Gastrocnemius medialis (tissue), 4 donors: ENCODE measurements at regions of chr7 and their contacts with region 1.

Region 1: GRCh38 chr7:6423942-6424701 is 23.6 kb downstream of the DAGLB start:
- DNase-seq: peak; percentile 90 to 97
- ATAC-seq: peak; percentile 76 to 79
- H3K4me3 ChIP-seq: no peak overlapping the region
- H3K27ac ChIP-seq: peak overlapping the region; percentile 81 to 87 (median 84)
- H3K4me1 ChIP-seq: peaks cover 21 to 35% of the 10 kb centered on the region in 2 donors
- H3K27me3 ChIP-seq: no peaks in the 10 kb centered on the region
- CTCF ChIP-seq: peak in 4 of 5 experiments; percentile 9 to 42 (median 30)
- POLR2A ChIP-seq: no peak

Region 2: DNA sequence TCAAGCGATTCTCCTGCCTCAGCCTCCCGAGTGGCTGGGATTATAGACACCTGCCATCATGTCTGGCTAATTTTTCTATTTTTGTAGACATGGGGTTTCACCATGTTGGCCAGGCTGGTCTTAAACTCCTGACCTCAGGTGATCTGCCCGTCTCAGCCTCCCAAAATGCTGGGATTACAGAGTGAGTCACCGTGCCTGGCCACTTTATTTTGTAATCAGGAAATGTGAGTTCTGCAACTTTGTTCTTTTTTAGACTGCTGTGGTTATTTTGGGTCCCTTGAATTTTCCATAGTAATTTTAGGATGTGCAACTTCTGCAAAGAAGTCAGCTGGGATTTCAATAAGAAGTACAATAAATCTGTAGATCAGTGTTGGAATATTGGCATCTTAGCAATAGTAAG is 248.5 kb before region 1 on chr7:
- in situ Hi-C with region 1: no loop called
- intact Hi-C with region 1: loop called (anchors 5 kb)
- DNase-seq: peak; percentile 53 to 79
- ATAC-seq: peak; percentile 72 to 78
- H3K4me3 ChIP-seq: no peak overlapping the region
- H3K27ac ChIP-seq: peak overlapping the region; percentile 14 to 77 (median 51)
- H3K4me1 ChIP-seq: peaks cover 27 to 36% of the 10 kb centered on the region in 2 donors
- H3K27me3 ChIP-seq: no peaks in the 10 kb centered on the region
- CTCF ChIP-seq: no peak
- POLR2A ChIP-seq: peak in 1 of 2 donors; percentile 24

Region 3: DNA sequence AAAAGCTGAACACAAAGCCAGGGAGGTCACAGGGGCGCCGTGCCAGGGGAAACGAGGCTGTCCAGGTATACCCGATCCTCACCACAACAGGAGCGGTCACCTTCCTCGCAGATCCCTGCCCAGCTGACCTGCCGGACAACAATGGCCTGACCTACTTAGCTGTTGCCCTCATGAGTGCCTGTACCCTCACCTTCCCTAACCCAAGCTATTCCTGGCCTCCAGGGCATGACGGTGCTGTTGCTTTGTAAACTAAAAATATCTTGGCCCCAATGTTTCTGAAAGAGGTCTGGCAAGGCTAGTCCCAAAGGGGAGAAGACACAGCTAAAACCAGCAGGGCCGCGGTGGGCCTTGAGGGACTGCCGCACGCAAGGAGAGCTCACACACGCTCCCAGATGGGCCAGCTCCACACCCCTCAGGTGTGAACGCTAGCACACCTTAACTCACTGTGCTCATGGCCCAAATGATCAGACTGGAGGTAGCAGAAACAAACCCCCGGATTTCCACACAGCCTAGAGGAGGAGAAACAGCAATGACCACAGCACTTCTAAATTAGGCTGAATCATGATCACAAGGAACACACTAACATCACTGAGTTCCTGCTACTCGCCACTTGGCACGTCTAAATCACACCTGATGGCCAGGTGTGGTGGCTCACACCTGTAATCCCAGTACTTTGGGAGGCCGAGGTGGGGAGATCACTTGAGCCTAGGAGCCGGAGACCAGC is 85.4 kb before region 1 on chr7:
- in situ Hi-C with region 1: no loop called
- intact Hi-C with region 1: no loop called
- DNase-seq: peak; percentile 91 to 96
- ATAC-seq: peak; percentile 95 to 96
- H3K4me3 ChIP-seq: peak overlapping the region in 3 of 4 donors; percentile 12 to 20 (median 18)
- H3K27ac ChIP-seq: peak overlapping the region; percentile 88 to 96 (median 94)
- H3K4me1 ChIP-seq: peaks cover 14 to 16% of the 10 kb centered on the region in 2 donors
- H3K27me3 ChIP-seq: no peaks in the 10 kb centered on the region
- CTCF ChIP-seq: no peak
- POLR2A ChIP-seq: peak; percentile 48 to 73

Region 4: GRCh38 chr7:6359021-6359420 is 65.1 kb before region 1 on chr7:
- in situ Hi-C with region 1: no loop called
- intact Hi-C with region 1: no loop called
- DNase-seq: no peak
- ATAC-seq: no peak
- H3K4me3 ChIP-seq: no peak overlapping the region
- H3K27ac ChIP-seq: no peak overlapping the region
- H3K4me1 ChIP-seq: no peaks in the 10 kb centered on the region
- H3K27me3 ChIP-seq: no peaks in the 10 kb centered on the region
- CTCF ChIP-seq: no peak
- POLR2A ChIP-seq: no peak

Region 5: DNA sequence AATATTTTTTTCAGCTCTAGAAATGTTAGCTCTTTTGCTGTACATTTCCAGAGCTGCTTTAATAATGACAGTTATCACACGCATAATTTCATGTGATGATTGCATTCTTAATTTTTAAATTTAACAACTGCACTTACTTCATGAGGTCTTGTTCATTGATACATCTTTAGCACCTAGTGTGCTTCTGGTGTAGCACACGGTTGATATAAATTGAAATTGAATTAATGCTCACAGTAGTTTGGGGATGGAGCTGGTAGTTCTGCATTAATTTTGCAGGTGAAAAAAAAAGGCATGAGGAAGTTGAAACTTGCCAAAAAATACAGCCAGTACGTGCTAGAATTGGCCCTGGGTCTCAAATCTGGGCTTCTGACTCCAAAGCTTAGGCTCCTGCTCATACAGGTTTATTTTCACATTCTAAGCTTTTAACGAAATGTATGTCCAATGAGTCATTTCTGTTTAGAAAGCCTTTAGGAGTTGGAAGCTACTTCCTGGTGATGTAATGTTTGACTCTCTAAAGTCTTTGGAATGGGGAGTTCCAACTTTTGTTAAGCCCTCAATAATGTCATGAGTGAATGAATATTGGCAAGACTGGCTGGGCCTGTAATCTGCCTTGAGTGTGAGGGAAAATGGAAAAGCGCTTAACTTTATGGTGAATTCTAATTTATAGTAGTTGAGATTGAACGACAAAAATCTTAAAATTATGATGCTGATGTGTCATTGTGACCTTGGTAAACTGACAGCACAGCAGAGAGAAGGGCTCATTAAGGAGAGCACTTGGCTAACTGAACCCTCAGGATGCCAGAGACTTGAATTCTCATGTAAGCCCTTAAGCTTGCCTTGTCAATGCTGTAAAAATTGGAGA is 38.8 kb before region 1 on chr7:
- in situ Hi-C with region 1: loop called in 1 of 4 experiments (anchors 5 kb)
- intact Hi-C with region 1: no loop called
- DNase-seq: no peak
- ATAC-seq: peak; percentile 45 to 46
- H3K4me3 ChIP-seq: no peak overlapping the region
- H3K27ac ChIP-seq: peak overlapping the region; percentile 59 to 67 (median 62)
- H3K4me1 ChIP-seq: peaks cover 49 to 70% of the 10 kb centered on the region in 2 donors
- H3K27me3 ChIP-seq: no peaks in the 10 kb centered on the region
- CTCF ChIP-seq: no peak
- POLR2A ChIP-seq: no peak